ENCODE measurements at regions of chr19 and their contacts with region 1.

Region 1: GRCh38 chr19:41353466-41354342 is at the start of gene TGFB1:
- DNase-seq: peak; percentile 87
- ATAC-seq: peak; percentile 78
- H3K4me3 ChIP-seq: peak within 1 kb of the TSS; percentile 76
- H3K27ac ChIP-seq: peak within 1 kb of the TSS; percentile 73
- H3K4me1 ChIP-seq: no peaks in the 10 kb centered on the region
- H3K27me3 ChIP-seq: no peaks in the 10 kb centered on the region
- CTCF ChIP-seq: peak; percentile 89
- POLR2A ChIP-seq: peak; percentile 85
- RAD21 ChIP-seq: peak; percentile 52
- total RNA-seq, gene TGFB1: 3.2 and 3.9 TPM in 2 replicates

Region 2: DNA sequence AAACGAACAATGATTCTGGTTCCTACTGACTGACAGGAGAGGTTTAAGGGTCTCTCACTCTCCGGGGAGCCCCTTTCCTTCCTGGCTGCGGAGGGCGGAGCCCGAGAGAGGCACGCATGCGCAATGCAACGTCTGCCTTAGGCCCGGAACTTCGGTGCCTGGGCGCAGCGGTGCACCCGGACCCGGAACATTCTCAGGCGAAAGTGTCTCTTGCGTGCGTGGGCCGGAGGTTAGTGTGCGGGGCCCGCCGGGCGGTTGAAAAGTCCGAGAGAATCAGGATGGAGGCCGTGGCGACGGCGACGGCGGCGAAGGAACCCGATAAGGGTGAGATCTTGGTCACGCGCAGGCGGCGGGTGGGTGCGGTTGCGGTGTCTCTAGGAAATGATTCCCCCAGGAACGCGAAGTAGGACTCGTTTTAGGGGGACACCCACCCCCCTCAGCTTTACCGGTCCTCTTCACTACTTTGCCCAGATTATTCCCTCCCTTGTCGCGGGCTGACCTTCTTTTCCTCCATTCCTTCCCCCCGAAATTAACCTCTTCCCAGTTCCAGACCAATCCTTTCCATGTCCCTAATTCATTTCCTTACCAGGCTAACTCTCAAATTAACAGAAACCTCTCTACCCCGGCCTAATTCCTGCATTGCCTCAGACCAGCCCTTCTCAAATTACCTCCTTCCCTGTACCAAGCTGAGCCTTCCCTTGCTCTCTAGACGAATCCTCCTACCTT is 43.5 kb before region 1 on chr19 and contains the start of gene CCDC97:
- CTCF ChIA-PET with region 1: interaction called, 3 read pairs
- POLR2A ChIA-PET with region 1: no interaction called
- dilution Hi-C with region 1: no loop called
- in situ Hi-C with region 1: no loop called
- intact Hi-C with region 1: loop called (anchors 1 kb)
- DNase-seq: peak; percentile 85
- ATAC-seq: peak; percentile 81
- H3K4me3 ChIP-seq: peak within 1 kb of the TSS; percentile 72
- H3K27ac ChIP-seq: peak within 1 kb of the TSS; percentile 96
- H3K4me1 ChIP-seq: peaks cover 7% of the 10 kb centered on the region
- H3K27me3 ChIP-seq: no peaks in the 10 kb centered on the region
- CTCF ChIP-seq: no peak
- POLR2A ChIP-seq: peak; percentile 82
- RAD21 ChIP-seq: no peak
- total RNA-seq, gene CCDC97: 4.1 and 5.8 TPM in 2 replicates

Region 3: DNA sequence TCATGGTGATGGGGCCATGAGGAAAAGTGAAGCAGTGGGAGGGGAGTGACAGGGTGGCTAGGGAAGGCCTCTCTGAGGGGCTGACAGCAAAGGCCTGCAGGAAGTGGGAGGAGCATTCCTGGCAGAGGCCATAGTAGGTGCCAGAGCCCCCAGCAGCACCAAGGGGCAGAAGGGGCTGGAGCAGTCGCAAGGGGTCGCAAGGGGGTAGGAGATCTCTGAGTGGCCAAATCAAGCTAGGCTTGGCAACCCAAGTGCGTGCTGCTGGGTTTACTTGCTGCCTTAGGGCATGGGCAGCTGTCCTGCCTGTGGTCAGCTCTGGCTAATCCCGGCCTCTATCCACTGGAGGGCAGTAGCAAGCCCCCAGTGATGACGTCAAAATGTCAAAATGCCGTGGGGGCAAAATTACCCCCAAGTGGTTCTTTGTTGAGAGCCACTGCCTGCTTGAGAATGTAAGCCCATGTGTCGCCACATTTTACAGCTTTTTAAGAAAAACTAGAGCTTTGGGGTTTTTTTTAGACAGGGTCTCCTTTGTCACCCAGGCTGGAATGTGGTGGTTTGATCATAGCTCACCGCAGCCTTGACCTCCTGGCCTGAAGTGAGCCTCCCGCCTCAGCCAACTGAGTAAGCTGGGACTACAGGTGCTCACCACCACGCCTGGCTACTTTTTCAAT is 32.0 kb before region 1 on chr19:
- CTCF ChIA-PET with region 1: interaction called, 4 read pairs
- POLR2A ChIA-PET with region 1: interaction called, 3 read pairs
- dilution Hi-C with region 1: no loop called
- in situ Hi-C with region 1: no loop called
- intact Hi-C with region 1: loop called (anchors 1 kb)
- DNase-seq: peak; percentile 80
- ATAC-seq: peak; percentile 16
- H3K4me3 ChIP-seq: no peak overlapping the region
- H3K27ac ChIP-seq: peak overlapping the region; percentile 93
- H3K4me1 ChIP-seq: peaks cover 44% of the 10 kb centered on the region
- H3K27me3 ChIP-seq: no peaks in the 10 kb centered on the region
- CTCF ChIP-seq: peak; percentile 82
- POLR2A ChIP-seq: peak; percentile 56; the same call in 1 of the 2 replicates
- RAD21 ChIP-seq: peak; percentile 54

Region 4: GRCh38 chr19:41397086-41398049 is 43.7 kb after region 1 on chr19 and contains the starts of genes BCKDHA and EXOSC5:
- CTCF ChIA-PET with region 1: no interaction called
- POLR2A ChIA-PET with region 1: no interaction called
- dilution Hi-C with region 1: no loop called
- in situ Hi-C with region 1: no loop called
- intact Hi-C with region 1: loop called (anchors 5 kb)
- DNase-seq: peak; percentile 100
- ATAC-seq: peak; percentile 99
- H3K4me3 ChIP-seq: peak within 1 kb of the TSS; percentile 79
- H3K27ac ChIP-seq: peak within 1 kb of the TSS; percentile 70
- H3K4me1 ChIP-seq: peaks cover 4% of the 10 kb centered on the region; the same call in 1 of the 2 replicates
- H3K27me3 ChIP-seq: no peaks in the 10 kb centered on the region
- CTCF ChIP-seq: no peak
- POLR2A ChIP-seq: 0 out of 2 replicates have a peak, but pooled peaks have one; percentile 43
- RAD21 ChIP-seq: 0 out of 2 replicates have a peak, but pooled peaks have one; percentile 5
- total RNA-seq, gene BCKDHA: 6.4 and 7.7 TPM in 2 replicates
- total RNA-seq, gene EXOSC5: 11.4 and 19.0 TPM in 2 replicates

Measured in IMR-90 (cell line).